ENCODE measurements at regions of chr2 and their contacts with region 1.

Region 1: GRCh38 chr2:83435989-83436388 is 1023.1 kb downstream of the SUCLG1 start:
- DNase-seq: no peak
- ATAC-seq: no peak
- H3K4me3 ChIP-seq: no peak overlapping the region
- H3K4me3 Mint-ChIP-seq: no peak overlapping the region
- H3K27ac ChIP-seq: no peak overlapping the region
- H3K27ac Mint-ChIP-seq: no peak overlapping the region
- H3K4me1 ChIP-seq: no peaks in the 10 kb centered on the region
- H3K4me1 Mint-ChIP-seq: no peaks in the 10 kb centered on the region
- H3K27me3 ChIP-seq: no peaks in the 10 kb centered on the region
- H3K27me3 Mint-ChIP-seq: no peaks in the 10 kb centered on the region

Region 2: GRCh38 chr2:83475371-83475770 is 39.4 kb after region 1 on chr2:
- CTCF ChIA-PET with region 1: no interaction called
- POLR2A ChIA-PET with region 1: interaction called in 1 of 2 experiments, 11 read pairs
- DNase-seq: no peak
- ATAC-seq: no peak
- H3K4me3 ChIP-seq: no peak overlapping the region
- H3K4me3 Mint-ChIP-seq: no peak overlapping the region
- H3K27ac ChIP-seq: no peak overlapping the region
- H3K27ac Mint-ChIP-seq: no peak overlapping the region
- H3K4me1 ChIP-seq: no peaks in the 10 kb centered on the region
- H3K4me1 Mint-ChIP-seq: no peaks in the 10 kb centered on the region
- H3K27me3 ChIP-seq: no peaks in the 10 kb centered on the region
- H3K27me3 Mint-ChIP-seq: no peaks in the 10 kb centered on the region

Region 3: GRCh38 chr2:83764447-83765005 is 328.5 kb after region 1 on chr2:
- CTCF ChIA-PET with region 1: no interaction called
- POLR2A ChIA-PET with region 1: no interaction called
- DNase-seq: no peak
- ATAC-seq: no peak
- H3K4me3 ChIP-seq: no peak overlapping the region
- H3K4me3 Mint-ChIP-seq: no peak overlapping the region
- H3K27ac ChIP-seq: no peak overlapping the region
- H3K27ac Mint-ChIP-seq: no peak overlapping the region
- H3K4me1 ChIP-seq: no peaks in the 10 kb centered on the region
- H3K4me1 Mint-ChIP-seq: no peaks in the 10 kb centered on the region
- H3K27me3 ChIP-seq: no peaks in the 10 kb centered on the region
- H3K27me3 Mint-ChIP-seq: no peaks in the 10 kb centered on the region

Region 4: GRCh38 chr2:83782122-83782521 is 346.1 kb after region 1 on chr2:
- CTCF ChIA-PET with region 1: no interaction called
- POLR2A ChIA-PET with region 1: no interaction called
- DNase-seq: no peak
- ATAC-seq: no peak
- H3K4me3 ChIP-seq: no peak overlapping the region
- H3K4me3 Mint-ChIP-seq: no peak overlapping the region
- H3K27ac ChIP-seq: no peak overlapping the region
- H3K27ac Mint-ChIP-seq: no peak overlapping the region
- H3K4me1 ChIP-seq: no peaks in the 10 kb centered on the region
- H3K4me1 Mint-ChIP-seq: no peaks in the 10 kb centered on the region
- H3K27me3 ChIP-seq: no peaks in the 10 kb centered on the region
- H3K27me3 Mint-ChIP-seq: no peaks in the 10 kb centered on the region

Measured in T-cell (primary cell).